ENCODE measurements at regions of chr14 and their contacts with region 1.

Region 1: GRCh38 chr14:77151918-77152588 is 10.5 kb upstream of the ZDHHC22 start:
- DNase-seq: no peak
- ATAC-seq: peak; percentile 53
- H3K4me3 ChIP-seq: no peak overlapping the region
- H3K4me1 ChIP-seq: no peaks in the 10 kb centered on the region
- CTCF ChIP-seq: no peak

Region 2: GRCh38 chr14:77212943-77213678 is 61.1 kb after region 1 on chr14:
- intact Hi-C with region 1: loop called in 1 of 2 experiments (anchors 10 kb)
- DNase-seq: peak in 2 of 3 donors; percentile 65 to 77
- ATAC-seq: peak; percentile 86
- H3K4me3 ChIP-seq: no peak overlapping the region
- H3K4me1 ChIP-seq: no peaks in the 10 kb centered on the region
- CTCF ChIP-seq: peak; percentile 53

Region 3: GRCh38 chr14:77314043-77314442 is 162.0 kb after region 1 on chr14:
- intact Hi-C with region 1: loop called (anchors 10 kb)
- DNase-seq: no peak
- ATAC-seq: peak; percentile 81
- H3K4me3 ChIP-seq: no peak overlapping the region
- H3K4me1 ChIP-seq: peaks cover 21% of the 10 kb centered on the region
- CTCF ChIP-seq: no peak

Measured in mucosa of descending colon (tissue), 3 donors.